ENCODE measurements at regions of chr20 and their contacts with region 1.

Region 1: GRCh38 chr20:33666293-33667244 is at the start of gene ACTL10:
- DNase-seq: peak; percentile 94 to 98
- H3K4me3 ChIP-seq: peak within 1 kb of the TSS; percentile 62
- H3K27ac ChIP-seq: peak within 1 kb of the TSS; percentile 63
- H3K4me1 ChIP-seq: peaks cover 37% of the 10 kb centered on the region; the same call in 1 of the 2 replicates
- H3K27me3 ChIP-seq: no peaks in the 10 kb centered on the region
- CTCF ChIP-seq: no peak; the same call in 1 of the 2 replicates
- total RNA-seq, gene ACTL10: 0.85 and 1.0 TPM in 2 replicates

Region 2: DNA sequence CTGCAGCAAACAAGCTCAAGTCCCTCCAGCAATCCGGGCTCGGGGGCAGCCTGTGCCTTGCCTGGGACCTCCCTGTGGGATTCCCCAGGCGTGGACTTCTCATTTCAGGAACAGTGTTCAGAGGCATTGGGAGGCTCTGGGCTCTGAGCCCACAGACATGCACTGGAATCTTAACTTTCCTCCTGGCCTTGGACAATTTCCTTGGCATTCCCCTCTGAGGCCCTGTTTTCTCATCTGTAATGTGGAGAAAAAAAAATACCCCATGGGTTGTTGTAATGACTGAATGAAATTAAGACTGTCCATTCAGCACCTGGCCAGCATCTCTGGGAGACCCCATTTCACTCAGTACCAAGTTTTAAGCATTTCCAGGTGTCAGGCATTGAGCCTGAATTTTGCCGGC is 569.6 kb before region 1 on chr20:
- CTCF ChIA-PET with region 1: no interaction called
- POLR2A ChIA-PET with region 1: no interaction called
- intact Hi-C with region 1: loop called (anchors 2 kb)
- DNase-seq: no peak
- H3K4me3 ChIP-seq: no peak overlapping the region
- H3K27ac ChIP-seq: no peak overlapping the region
- H3K4me1 ChIP-seq: no peaks in the 10 kb centered on the region
- H3K27me3 ChIP-seq: no peaks in the 10 kb centered on the region; the same call in 1 of the 2 replicates
- CTCF ChIP-seq: no peak

Region 3: GRCh38 chr20:33459599-33459998 is 207.0 kb before region 1 on chr20:
- CTCF ChIA-PET with region 1: no interaction called
- POLR2A ChIA-PET with region 1: no interaction called
- intact Hi-C with region 1: loop called (anchors 5 kb)
- DNase-seq: no peak
- H3K4me3 ChIP-seq: no peak overlapping the region
- H3K27ac ChIP-seq: no peak overlapping the region
- H3K4me1 ChIP-seq: peaks cover 6% of the 10 kb centered on the region; the same call in 1 of the 2 replicates
- H3K27me3 ChIP-seq: no peaks in the 10 kb centered on the region
- CTCF ChIP-seq: no peak

Region 4: DNA sequence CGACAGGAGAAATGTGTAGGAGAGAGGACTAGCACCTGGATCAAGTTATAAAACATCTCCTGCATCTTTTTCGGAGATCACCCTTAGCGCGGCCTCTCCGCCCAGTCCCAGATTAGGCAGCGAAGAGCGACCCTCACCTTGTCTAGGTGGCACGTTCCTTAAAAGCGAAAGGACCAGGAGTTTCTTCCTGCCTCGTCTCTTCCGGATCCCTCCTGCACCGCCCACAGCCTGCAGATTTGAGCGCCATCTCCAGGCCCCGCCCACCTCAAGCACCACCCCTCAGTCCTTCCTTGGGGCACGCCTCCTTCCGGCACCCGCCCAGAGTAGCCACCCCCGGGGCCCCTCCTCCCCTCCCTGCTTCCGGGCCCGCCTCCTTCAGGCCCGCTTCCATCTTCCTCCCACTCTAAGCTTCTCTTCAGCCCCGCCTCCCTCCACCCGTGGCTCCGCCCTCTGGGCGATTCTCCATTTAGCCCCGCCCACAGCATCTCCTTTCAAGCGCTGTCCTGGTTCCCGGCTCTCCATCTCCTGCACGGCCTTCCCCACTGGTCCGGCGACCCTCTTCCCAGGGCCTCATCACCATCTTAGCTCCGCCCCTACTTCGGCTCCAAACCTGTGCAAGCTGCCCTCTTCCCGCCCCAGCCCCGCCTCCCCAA is 326.5 kb after region 1 on chr20:
- CTCF ChIA-PET with region 1: no interaction called
- POLR2A ChIA-PET with region 1: interaction called, 4 read pairs
- intact Hi-C with region 1: loop called (anchors 10 kb)
- DNase-seq: peak; percentile 93 to 100
- H3K4me3 ChIP-seq: peak overlapping the region; percentile 92
- H3K27ac ChIP-seq: peak overlapping the region; percentile 86
- H3K4me1 ChIP-seq: peaks cover 28% of the 10 kb centered on the region
- H3K27me3 ChIP-seq: no peaks in the 10 kb centered on the region
- CTCF ChIP-seq: no peak

Region 5: DNA sequence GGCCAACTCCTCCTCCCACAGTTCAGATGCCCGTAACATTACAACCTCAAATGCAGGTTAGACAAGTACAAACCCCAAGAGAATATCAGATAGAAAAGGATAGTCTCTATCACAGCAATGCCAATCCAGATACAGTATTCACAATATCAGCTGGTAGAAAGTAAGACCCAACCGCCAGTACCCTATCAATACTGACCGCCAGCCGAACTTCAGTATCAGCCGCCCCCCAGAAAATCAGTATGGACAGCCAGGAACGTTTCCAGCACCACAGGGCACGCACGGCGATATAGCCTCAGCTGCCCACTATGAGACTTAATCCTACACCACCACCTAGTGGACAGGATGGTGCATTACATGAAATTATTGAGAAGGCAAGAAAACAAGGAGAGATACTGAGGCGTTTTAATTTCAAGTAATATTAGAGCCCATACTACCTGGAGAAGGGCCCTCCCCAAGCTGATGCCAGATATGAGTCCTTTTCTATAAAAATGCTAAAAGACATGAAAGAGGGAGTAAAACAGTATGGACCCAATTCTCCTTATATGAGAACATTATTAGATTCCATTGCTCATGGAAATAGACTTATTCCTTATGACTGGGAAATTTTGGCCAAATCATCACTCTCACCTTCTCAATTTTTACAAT is 463.1 kb after region 1 on chr20:
- CTCF ChIA-PET with region 1: interaction called, 16 read pairs
- POLR2A ChIA-PET with region 1: no interaction called
- intact Hi-C with region 1: no loop called
- DNase-seq: peak; percentile 55 to 60
- H3K4me3 ChIP-seq: no peak overlapping the region
- H3K27ac ChIP-seq: no peak overlapping the region
- H3K4me1 ChIP-seq: peaks cover 4% of the 10 kb centered on the region
- H3K27me3 ChIP-seq: no peaks in the 10 kb centered on the region
- CTCF ChIP-seq: peak; percentile 91